ENCODE measurements at regions of chr2 and their contacts with region 1.

Region 1: GRCh38 chr2:120312861-120313694 is 32.9 kb upstream of the INHBB start:
- DNase-seq: peak; percentile 84
- ATAC-seq: peak; percentile 85
- H3K4me3 Mint-ChIP-seq: peak overlapping the region; percentile 74
- H3K27ac Mint-ChIP-seq: peak overlapping the region; percentile 73
- H3K4me1 Mint-ChIP-seq: peaks cover 31% of the 10 kb centered on the region
- H3K27me3 Mint-ChIP-seq: peaks cover 5% of the 10 kb centered on the region

Region 2: DNA sequence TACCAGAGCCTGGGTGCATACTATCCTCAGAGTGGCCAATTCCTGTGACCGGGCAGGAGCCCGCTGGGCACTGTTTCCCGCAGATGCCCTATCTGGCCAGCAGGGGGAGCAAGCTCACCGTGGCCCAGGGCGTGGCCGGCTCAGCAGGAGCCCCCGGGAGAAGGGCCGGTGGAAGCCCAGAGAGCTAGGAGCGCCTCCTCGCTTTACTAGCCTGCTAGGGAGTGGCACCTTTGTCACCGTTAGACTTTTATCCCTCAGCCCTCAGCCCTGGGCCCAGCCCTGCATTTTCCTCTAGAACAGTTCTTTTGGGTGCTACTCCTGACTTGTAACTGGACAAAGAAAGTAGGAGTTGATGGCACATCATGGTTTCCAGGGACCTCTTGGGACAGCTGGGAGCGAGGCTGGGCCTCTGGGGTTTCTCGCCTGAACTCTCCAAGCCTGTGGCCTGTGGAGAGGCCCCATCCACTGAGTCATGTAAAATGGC is 610.1 kb before region 1 on chr2:
- CTCF ChIA-PET with region 1: interaction called, 12 read pairs
- DNase-seq: peak; percentile 76
- ATAC-seq: peak; percentile 93
- H3K4me3 Mint-ChIP-seq: no peak overlapping the region
- H3K27ac Mint-ChIP-seq: no peak overlapping the region
- H3K4me1 Mint-ChIP-seq: peaks cover 11% of the 10 kb centered on the region
- H3K27me3 Mint-ChIP-seq: peaks cover 10% of the 10 kb centered on the region

Region 3: GRCh38 chr2:120174963-120175581 is 138.0 kb before region 1 on chr2:
- CTCF ChIA-PET with region 1: interaction called, 93 read pairs
- DNase-seq: no peak
- ATAC-seq: no peak
- H3K4me3 Mint-ChIP-seq: no peak overlapping the region
- H3K27ac Mint-ChIP-seq: peak overlapping the region; percentile 37
- H3K4me1 Mint-ChIP-seq: peaks cover 47% of the 10 kb centered on the region
- H3K27me3 Mint-ChIP-seq: no peaks in the 10 kb centered on the region

Region 4: GRCh38 chr2:120206022-120206581 is 107.0 kb before region 1 on chr2:
- CTCF ChIA-PET with region 1: interaction called, 51 read pairs
- DNase-seq: peak; percentile 68
- ATAC-seq: peak; percentile 67
- H3K4me3 Mint-ChIP-seq: no peak overlapping the region
- H3K27ac Mint-ChIP-seq: no peak overlapping the region
- H3K4me1 Mint-ChIP-seq: peaks cover 8% of the 10 kb centered on the region
- H3K27me3 Mint-ChIP-seq: no peaks in the 10 kb centered on the region

Region 5: GRCh38 chr2:120252225-120253021 is 60.7 kb before region 1 on chr2 and contains the start of gene RALB:
- CTCF ChIA-PET with region 1: interaction called, 10 read pairs
- DNase-seq: peak; percentile 99
- ATAC-seq: peak; percentile 96
- H3K4me3 Mint-ChIP-seq: peak within 1 kb of the TSS; percentile 98
- H3K27ac Mint-ChIP-seq: peak within 1 kb of the TSS; percentile 92
- H3K4me1 Mint-ChIP-seq: peaks cover 59% of the 10 kb centered on the region
- H3K27me3 Mint-ChIP-seq: peaks cover 17% of the 10 kb centered on the region
- total RNA-seq, gene RALB: 36.7 to 41.8 TPM

Region 6: DNA sequence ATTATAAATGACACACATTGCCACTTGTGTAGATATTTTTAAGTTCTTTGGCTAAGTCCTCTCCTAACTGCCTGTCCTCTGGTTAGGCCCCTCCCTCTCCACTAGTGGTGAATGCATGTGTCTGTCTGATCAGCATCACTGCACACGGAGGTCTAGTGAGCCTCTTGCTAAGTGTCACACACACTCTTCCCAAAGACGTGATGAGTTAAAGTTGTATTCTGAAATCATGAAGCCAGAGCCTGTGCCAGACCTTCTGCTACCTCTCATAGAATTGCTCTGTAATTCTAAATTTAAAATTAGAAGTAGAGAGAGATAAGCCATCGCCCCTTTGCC is 19.1 kb before region 1 on chr2:
- CTCF ChIA-PET with region 1: interaction called, 20 read pairs
- DNase-seq: no peak
- ATAC-seq: no peak
- H3K4me3 Mint-ChIP-seq: no peak overlapping the region
- H3K27ac Mint-ChIP-seq: no peak overlapping the region
- H3K4me1 Mint-ChIP-seq: peaks cover 26% of the 10 kb centered on the region
- H3K27me3 Mint-ChIP-seq: no peaks in the 10 kb centered on the region